ENCODE measurements at regions of chr1 and their contacts with region 1.

Region 1: DNA sequence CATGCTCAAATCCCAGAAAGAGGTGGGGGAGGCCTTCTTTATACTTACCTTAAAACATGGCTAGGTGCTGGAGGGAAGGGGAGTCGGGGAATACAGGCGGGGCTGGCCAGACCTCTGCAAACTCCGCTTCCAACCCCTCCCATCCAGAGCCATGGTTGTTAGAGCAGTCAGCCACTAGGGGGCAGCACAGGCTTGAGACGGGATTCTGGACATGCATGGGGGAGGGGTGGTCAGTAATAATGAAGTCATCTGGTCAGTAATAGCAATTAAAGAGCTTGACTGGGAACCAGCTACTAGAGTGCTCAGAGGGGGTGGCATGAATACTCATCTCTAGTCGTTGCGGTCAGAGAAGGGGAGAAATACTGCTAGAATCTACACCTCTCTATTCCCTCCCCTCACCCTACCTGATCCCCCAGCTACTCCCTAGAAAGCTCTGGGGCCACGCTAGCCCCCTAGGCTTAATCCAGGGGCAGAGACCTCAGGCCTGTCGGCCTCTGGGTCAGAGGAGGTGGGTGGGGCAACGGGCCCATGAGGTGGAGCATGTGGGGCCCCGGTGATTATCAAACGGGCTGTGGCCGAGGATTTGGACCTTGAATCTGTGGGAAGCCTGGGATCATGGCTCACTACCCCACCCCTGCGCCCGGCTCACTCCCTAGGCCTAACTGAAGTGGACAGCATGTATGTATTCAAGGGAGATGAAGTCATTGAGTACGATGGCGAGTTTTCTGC is 2.9 kb downstream of the CASQ1 start:
- DNase-seq: peak; percentile 80
- H3K4me3 ChIP-seq: peak overlapping the region in 1 of 2 experiments; percentile 25; a peak in 1 of 4 replicates
- H3K27ac ChIP-seq: peak overlapping the region in 1 of 2 experiments; percentile 11; a peak in 1 of 4 replicates
- H3K4me1 ChIP-seq: peaks cover 3 to 5% of the 10 kb centered on the region in 2 experiments; a peak in 2 of 4 replicates
- H3K27me3 ChIP-seq: no peaks in the 10 kb centered on the region
- CTCF ChIP-seq: peak; percentile 96
- EP300 ChIP-seq: peak in 1 of 2 experiments; percentile 22; a peak in 1 of 4 replicates
- RAD21 ChIP-seq: peak; percentile 98

Region 2: GRCh38 chr1:160085686-160086455 is 107.4 kb before region 1 on chr1:
- CTCF ChIA-PET with region 1: interaction called, 17 read pairs
- POLR2A ChIA-PET with region 1: no interaction called
- DNase-seq: peak; percentile 91
- H3K4me3 ChIP-seq: no peak overlapping the region
- H3K27ac ChIP-seq: no peak overlapping the region
- H3K4me1 ChIP-seq: peaks cover 0 to 13% of the 10 kb centered on the region in 2 experiments; a peak in 1 of 4 replicates
- H3K27me3 ChIP-seq: peaks cover 22% of the 10 kb centered on the region; the same call in 1 of the 2 replicates
- CTCF ChIP-seq: peak; percentile 78
- EP300 ChIP-seq: no peak
- RAD21 ChIP-seq: peak; percentile 76

Region 3: DNA sequence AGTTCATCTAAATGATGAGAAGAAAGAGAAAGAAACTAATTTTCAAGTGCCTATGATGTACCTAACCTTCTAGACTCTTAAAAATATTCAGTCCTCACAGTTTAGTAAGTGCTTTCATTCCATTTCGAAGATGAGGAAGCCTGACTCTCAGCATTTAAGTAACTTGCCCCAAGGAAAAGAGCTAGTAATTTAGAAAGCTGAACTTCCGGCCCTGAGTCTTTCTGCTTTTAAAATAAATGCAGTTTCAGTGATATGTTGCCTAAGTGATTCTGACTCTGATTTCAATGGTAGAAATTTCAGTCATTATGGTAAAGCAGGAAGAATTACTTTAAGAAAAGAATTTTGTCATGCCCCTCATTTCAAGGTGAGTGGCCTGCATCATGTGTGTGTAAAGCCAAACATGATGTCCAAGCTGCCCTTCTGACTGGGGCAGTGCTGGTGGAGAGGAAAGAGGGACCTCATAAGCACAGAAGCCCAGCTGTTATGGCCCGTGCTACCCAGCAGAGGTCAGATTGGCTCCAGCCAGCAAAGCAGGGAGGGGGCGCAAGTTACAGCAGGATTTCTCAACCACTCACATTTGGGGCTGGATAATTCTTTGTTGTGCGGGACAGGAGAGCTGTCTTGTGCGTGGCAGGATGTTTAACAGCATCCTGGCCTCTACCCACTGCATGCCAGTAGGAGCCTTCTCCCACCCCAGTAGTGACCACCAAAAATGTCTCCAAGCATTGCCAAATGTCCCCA is 31.1 kb before region 1 on chr1:
- CTCF ChIA-PET with region 1: interaction called, 18 read pairs
- POLR2A ChIA-PET with region 1: no interaction called
- DNase-seq: no peak
- H3K4me3 ChIP-seq: no peak overlapping the region
- H3K27ac ChIP-seq: no peak overlapping the region
- H3K4me1 ChIP-seq: no peaks in the 10 kb centered on the region
- H3K27me3 ChIP-seq: peaks cover 10% of the 10 kb centered on the region; the same call in 1 of the 2 replicates
- CTCF ChIP-seq: peak; percentile 44
- EP300 ChIP-seq: no peak
- RAD21 ChIP-seq: peak; percentile 40

Region 4: DNA sequence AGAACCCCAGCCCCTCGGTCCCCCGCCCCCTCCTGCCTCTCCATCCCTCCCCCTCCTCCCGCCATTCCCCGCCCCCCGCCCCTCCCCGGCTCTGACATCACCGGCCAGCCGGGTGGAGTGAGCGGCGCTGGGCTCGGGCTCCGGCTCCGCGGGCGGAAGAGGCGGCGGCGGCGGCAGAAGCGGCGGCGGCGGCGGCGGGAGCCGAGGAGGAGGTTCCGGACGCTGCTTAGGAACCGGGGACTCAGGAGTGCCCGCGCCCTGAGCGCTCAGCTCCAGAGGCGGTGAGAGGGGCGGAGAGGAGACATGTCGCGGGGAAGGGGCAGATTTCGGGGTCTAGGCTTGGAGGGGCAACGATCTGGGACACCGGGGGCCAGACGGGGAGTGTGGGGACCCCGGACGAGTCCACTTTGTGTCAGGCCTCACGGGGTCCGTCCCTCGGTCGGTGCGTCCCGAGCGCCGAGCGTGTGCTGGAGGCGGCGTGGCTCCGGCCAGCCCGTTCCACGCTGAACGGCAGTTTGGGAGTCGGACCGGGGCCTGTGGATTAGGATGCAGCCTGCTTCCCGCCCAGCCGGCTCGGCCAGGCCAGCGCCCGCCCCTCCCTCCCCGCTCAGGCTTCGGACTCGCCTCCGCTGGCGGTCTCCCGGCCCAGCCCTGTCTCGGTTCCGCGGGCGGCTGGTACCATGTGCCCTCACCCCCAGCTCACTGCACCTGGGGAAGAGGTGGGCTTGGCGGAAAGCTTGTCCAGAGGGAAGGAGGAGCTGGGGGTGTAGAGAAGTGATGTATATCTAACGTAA is 12.2 kb after region 1 on chr1 and contains the start of gene PEA15:
- CTCF ChIA-PET with region 1: interaction called, 137 read pairs
- POLR2A ChIA-PET with region 1: no interaction called
- DNase-seq: peak; percentile 96
- H3K4me3 ChIP-seq: peak within 1 kb of the TSS; percentile 94 to 97
- H3K27ac ChIP-seq: peak within 1 kb of the TSS; percentile 87 to 99
- H3K4me1 ChIP-seq: peaks cover 36 to 56% of the 10 kb centered on the region in 2 experiments
- H3K27me3 ChIP-seq: no peaks in the 10 kb centered on the region
- CTCF ChIP-seq: no peak
- EP300 ChIP-seq: peak in 1 of 2 experiments; percentile 39; a peak in 1 of 4 replicates
- RAD21 ChIP-seq: no peak
- polyA plus RNA-seq, gene PEA15: 322 and 382 TPM in 2 replicates

Region 5: GRCh38 chr1:160226623-160227022 is 33.4 kb after region 1 on chr1:
- CTCF ChIA-PET with region 1: interaction called, 293 read pairs
- POLR2A ChIA-PET with region 1: no interaction called
- DNase-seq: no peak
- H3K4me3 ChIP-seq: no peak overlapping the region
- H3K27ac ChIP-seq: no peak overlapping the region
- H3K4me1 ChIP-seq: no peaks in the 10 kb centered on the region
- H3K27me3 ChIP-seq: no peaks in the 10 kb centered on the region
- CTCF ChIP-seq: no peak
- EP300 ChIP-seq: no peak
- RAD21 ChIP-seq: no peak

Region 6: GRCh38 chr1:160284782-160285344 is 91.6 kb after region 1 on chr1 and contains the start of gene PEX19:
- CTCF ChIA-PET with region 1: interaction called, 76 read pairs
- POLR2A ChIA-PET with region 1: no interaction called
- DNase-seq: peak; percentile 93
- H3K4me3 ChIP-seq: peak within 1 kb of the TSS; percentile 74 to 77
- H3K27ac ChIP-seq: peak within 1 kb of the TSS; percentile 55 to 81
- H3K4me1 ChIP-seq: peaks cover 6 to 15% of the 10 kb centered on the region in 2 experiments
- H3K27me3 ChIP-seq: no peaks in the 10 kb centered on the region
- CTCF ChIP-seq: no peak
- EP300 ChIP-seq: no peak
- RAD21 ChIP-seq: no peak
- polyA plus RNA-seq, gene PEX19: 31.4 and 52.1 TPM in 2 replicates